ENCODE measurements at regions of chr20 and their contacts with region 1.

Region 1: DNA sequence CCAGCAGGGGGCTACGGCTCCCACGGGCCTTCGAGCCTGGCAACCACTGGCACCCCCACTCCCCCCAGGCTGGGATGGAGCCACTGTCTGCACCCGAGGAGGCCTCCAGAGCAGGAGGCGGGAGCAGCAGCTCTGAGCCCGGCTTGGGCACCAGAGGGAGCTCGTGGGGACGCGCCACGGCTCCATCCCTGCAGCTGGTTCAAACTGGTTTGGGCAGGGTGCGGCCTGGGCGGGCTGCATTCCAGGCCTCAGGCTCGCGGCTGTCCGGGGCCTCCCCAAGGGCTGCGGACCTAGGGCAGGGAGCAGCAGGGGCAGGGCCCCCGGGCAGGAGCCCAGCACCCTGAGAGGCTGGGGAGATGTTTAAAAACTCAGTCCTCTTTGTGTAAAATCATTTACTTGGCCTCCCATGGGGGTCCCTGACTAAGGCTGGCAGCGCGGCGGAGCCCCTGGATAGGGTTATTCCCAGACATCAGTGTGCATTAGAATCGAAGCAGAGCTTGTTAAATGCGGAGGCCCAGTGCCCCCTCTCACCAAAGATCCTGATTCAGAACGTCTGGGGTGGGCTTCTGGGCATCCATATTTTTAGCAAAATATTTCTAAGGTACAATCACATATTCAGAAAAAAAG is 4.1 kb upstream of the BCAS4 start:
- DNase-seq: peak; percentile 85
- H3K4me3 Mint-ChIP-seq: no peak overlapping the region
- H3K27ac Mint-ChIP-seq: peak overlapping the region; percentile 42
- H3K4me1 Mint-ChIP-seq: peaks cover 22% of the 10 kb centered on the region
- H3K27me3 Mint-ChIP-seq: no peaks in the 10 kb centered on the region

Region 2: DNA sequence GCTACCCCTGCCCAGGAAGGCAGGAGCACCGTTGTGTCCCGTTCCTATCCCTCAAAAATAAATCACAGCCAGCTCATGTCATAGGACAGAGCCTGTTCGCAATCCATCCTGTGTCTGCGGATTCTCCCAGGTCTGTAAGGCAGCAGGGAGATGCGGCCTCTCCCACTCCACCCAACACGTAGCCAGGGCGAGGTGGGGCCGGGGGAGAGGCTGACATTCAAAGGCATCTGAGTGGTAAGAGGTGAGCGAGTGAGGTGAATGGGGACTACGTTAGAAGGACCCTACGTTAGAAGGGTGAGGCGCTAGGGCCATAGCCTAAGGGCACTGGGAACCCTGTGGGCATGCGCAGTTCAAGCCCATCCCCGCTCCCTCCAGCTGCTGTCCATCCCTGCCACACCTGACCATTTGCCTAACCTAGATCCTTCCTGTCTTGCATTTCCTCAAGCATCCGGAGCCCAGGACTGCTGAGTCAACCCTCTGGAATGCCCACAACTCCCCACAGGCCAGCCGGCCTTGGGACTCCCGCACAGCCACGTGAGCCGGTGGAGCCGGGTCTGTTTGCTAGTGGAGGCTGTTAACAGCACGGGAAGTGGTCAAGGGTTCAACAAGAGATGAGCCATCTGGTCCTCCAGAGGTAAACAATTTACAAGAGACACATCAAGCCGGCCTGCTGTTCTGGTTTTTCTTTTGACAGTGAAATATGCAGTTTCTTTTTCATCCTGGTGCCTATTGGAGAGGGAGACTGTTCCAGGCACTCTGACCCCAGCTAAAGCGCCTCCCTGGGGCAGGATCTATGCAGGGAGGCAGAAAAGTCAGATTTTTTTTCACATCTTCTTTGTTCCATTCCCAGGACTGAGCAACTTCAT is 145.3 kb before region 1 on chr20:
- CTCF ChIA-PET with region 1: no interaction called
- POLR2A ChIA-PET with region 1: no interaction called
- DNase-seq: no peak
- H3K4me3 Mint-ChIP-seq: no peak overlapping the region
- H3K27ac Mint-ChIP-seq: no peak overlapping the region
- H3K4me1 Mint-ChIP-seq: no peaks in the 10 kb centered on the region
- H3K27me3 Mint-ChIP-seq: no peaks in the 10 kb centered on the region

Region 3: DNA sequence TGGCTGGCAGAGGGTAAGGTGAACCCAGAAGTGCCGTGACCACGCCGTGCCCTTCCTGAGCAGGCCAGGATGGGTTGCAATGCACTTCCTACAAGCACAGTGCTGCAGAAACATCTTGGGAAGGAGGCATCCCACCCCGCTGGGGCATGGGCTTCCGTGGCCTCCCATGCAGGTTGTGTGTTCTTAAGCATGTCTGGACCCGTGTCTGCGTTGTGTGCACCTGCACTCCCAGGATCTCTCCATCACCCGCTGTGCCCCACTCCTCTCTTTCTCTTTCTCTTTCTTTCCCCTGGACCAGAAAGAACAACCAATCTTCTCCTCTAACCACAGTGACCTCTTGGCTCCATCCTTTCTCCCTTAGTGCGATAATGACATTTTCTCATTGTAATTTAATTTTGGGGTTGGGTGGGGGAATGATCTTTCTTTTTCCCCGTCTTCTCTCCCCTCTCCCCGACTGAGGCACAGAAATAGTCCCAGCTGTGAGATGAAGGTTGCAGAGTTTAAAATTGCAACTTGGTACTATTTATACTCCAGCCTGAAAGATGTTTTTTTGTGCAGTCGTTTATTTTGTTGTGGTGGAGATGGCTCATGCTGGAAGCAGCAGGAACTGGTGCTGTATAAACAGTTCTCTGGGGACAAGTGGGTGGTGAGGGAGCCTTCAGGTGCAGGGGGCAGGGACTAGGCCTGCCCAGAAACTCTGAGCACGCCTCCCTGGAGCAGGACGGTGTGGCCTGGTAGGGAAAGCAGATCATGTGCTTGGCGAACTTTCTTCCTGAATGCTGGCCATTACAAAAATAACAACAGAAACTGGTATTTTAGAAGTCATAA is 24.6 kb after region 1 on chr20:
- CTCF ChIA-PET with region 1: interaction called, 23 read pairs
- POLR2A ChIA-PET with region 1: interaction called, 7 read pairs
- DNase-seq: no peak
- H3K4me3 Mint-ChIP-seq: no peak overlapping the region
- H3K27ac Mint-ChIP-seq: no peak overlapping the region
- H3K4me1 Mint-ChIP-seq: peaks cover 30% of the 10 kb centered on the region
- H3K27me3 Mint-ChIP-seq: no peaks in the 10 kb centered on the region

Region 4: GRCh38 chr20:50895111-50895830 is 104.5 kb after region 1 on chr20:
- CTCF ChIA-PET with region 1: interaction called, 11 read pairs
- POLR2A ChIA-PET with region 1: interaction called, 4 read pairs
- DNase-seq: no peak
- H3K4me3 Mint-ChIP-seq: no peak overlapping the region
- H3K27ac Mint-ChIP-seq: no peak overlapping the region
- H3K4me1 Mint-ChIP-seq: peaks cover 12% of the 10 kb centered on the region
- H3K27me3 Mint-ChIP-seq: no peaks in the 10 kb centered on the region

Region 5: DNA sequence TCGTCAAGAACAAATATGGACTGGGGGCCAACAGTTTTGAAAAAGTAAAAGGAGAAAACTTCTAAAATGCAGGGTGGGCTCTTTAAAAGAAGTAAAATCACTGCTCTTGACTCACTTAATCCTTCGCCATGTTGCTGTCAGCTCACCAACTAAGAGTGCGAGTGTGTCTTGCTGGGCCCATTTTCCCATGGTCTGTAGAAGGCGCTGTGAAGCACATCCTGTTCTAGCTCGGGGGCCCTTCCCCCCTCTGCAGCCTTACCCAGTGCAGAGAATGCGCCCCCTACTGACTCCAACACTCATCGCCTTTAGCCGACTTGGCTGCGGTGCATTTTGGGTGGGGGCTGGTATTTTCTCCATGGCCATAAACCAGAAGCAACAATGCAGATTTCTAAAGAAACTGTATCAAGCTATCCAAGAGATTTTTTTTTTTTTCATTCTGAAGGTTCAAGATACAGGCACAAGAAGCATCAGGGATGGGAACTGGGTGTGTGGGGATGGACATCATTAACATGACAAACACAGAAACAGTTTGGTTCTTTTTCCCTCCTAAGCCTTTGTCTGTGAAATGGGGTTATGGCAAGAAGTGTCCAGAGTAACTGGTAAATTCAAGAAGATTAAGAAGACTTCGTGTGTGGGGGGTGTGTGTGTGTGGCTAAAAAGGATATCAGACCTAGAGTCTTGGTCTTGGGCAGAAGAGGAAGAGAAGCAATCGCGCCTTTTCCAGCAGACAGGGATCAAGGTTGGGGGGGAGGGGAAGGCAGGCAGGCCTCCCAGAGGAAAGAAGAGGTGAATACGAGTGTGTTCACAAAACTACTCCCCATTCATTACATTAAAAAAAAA is 138.8 kb after region 1 on chr20:
- CTCF ChIA-PET with region 1: interaction called, 289 read pairs
- POLR2A ChIA-PET with region 1: interaction called, 134 read pairs
- DNase-seq: peak; percentile 96
- H3K4me3 Mint-ChIP-seq: peak overlapping the region; percentile 91
- H3K27ac Mint-ChIP-seq: peak overlapping the region; percentile 96
- H3K4me1 Mint-ChIP-seq: peaks cover 56% of the 10 kb centered on the region
- H3K27me3 Mint-ChIP-seq: no peaks in the 10 kb centered on the region

Region 6: DNA sequence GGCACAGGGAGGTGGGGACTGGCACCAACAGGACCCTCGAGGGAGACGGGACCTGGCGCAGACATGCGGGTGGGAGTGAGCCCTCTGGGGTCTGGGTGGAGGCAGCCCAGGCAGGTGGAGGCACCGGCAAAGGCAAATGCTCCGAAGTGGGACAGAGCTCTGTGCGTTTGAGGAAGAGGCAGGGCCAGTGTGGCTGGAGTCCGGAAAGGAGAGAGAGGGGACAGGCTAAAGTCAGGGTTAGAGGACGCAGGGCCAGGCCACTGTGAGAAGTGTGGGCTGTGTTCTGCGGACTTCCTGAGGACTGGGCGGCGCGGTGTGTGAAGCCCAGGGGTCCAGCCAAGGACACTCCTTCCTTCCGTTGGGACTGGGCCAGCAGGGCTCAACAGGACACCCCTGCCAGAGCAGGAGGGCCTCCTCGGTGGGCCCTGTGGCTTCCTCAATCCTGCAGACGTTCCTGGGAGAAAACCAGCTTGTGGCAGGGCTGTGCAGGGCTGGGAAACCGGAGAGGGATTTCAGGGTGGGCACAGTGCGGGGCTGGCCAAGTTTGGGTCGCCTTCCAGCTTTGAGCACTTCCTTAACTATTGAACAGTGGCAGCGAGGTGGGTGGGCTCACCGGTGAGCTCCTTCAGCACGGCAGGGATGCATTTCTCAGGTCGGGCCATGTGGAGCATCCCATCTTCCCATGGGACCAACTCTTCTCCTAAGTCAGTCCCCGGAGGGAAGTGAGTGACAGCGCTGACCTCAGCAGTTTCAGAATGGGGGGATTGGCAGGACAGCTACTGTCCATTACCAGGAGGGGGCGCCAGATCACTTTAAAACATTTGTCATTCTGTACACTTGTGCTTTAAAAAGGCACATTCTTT is 190.3 kb after region 1 on chr20:
- CTCF ChIA-PET with region 1: interaction called, 26 read pairs
- POLR2A ChIA-PET with region 1: interaction called, 4 read pairs
- DNase-seq: peak; percentile 66
- H3K4me3 Mint-ChIP-seq: no peak overlapping the region
- H3K27ac Mint-ChIP-seq: no peak overlapping the region
- H3K4me1 Mint-ChIP-seq: peaks cover 8% of the 10 kb centered on the region
- H3K27me3 Mint-ChIP-seq: peaks cover 22% of the 10 kb centered on the region

Measured in activated CD4-positive, alpha-beta memory T cell treated with anti-CD3 and anti-CD28 coated beads, Interleukin-2, amount 10 ng/mL, durations not matched to agents 7 days and 5 days (primary cell).